ENCODE measurements at regions of chr12 and their contacts with region 1.

Region 1: DNA sequence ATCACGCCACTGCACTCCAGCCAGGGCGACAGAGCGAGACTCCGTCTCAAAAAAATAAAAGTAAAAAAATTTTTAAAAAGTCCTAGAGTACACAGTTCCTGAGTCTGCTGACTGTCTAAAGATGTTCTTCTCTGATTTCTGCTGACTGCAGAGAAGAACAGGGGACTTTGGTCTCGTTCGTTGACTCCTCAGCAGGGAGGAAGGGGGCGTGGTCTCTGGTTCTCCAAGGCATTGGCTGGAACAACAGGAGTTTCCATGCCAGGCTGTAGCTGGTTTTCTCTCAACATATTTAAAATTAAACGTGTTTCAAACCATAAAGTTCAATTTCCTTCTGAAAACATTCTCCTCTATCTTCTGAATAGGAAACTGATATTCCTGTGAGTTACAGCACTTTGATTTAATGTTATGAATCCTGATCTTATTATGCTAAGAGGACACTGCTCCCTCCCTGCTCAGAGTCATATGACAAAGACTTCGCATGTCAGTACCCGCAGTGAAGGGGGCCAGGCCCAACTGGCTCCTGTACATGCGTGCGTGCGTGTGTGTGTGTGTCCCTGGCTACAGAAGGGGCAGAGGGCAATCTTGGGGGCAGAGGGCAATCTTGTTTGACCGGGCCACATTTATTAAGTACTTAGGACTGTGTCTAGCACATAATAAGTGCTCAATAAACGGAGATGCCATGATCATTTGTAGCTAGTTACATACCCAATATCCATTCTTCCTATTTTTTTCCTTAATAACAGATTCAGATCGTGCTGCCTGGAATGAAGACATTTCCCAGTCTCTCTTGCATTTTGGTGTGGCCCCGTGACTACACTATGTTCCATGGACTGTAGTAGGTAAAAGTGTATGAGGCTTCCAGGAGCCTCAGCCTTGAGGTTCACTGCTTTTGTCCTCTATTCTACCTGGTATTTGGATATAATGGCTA is 16.5 kb upstream of the HNF1A start:
- DNase-seq: peak; percentile 27
- ATAC-seq: no peak
- H3K4me3 Mint-ChIP-seq: no peak overlapping the region
- H3K27ac Mint-ChIP-seq: peak overlapping the region; percentile 59
- H3K4me1 Mint-ChIP-seq: peaks cover 44% of the 10 kb centered on the region
- H3K27me3 Mint-ChIP-seq: no peaks in the 10 kb centered on the region

Region 2: DNA sequence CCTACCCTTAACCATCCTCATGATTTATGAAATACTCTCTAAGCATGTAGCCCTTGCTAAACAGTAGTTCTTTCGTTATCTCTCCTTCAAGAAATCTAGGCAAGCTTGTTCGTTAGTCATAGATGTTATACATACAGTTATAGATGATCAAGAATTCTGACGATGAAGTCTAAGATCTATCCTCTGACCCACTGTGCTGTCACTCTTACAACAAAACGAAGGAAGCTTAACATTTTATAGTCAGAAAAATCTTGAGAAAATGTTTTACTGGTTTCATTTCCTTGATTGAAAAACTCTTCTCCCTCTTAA is 126.6 kb before region 1 on chr12:
- CTCF ChIA-PET with region 1: interaction called, 3 read pairs
- POLR2A ChIA-PET with region 1: interaction called, 3 read pairs
- intact Hi-C with region 1: loop called in 1 of 2 experiments (anchors 5 kb)
- DNase-seq: no peak
- ATAC-seq: peak; percentile 86
- H3K4me3 Mint-ChIP-seq: peak overlapping the region; percentile 56
- H3K27ac Mint-ChIP-seq: peak overlapping the region; percentile 83
- H3K4me1 Mint-ChIP-seq: peaks cover 64% of the 10 kb centered on the region
- H3K27me3 Mint-ChIP-seq: no peaks in the 10 kb centered on the region

Region 3: GRCh38 chr12:120944645-120945231 is 17.1 kb before region 1 on chr12:
- CTCF ChIA-PET with region 1: interaction called, 10 read pairs
- POLR2A ChIA-PET with region 1: no interaction called
- intact Hi-C with region 1: no loop called
- DNase-seq: peak; percentile 86
- ATAC-seq: peak; percentile 91
- H3K4me3 Mint-ChIP-seq: no peak overlapping the region
- H3K27ac Mint-ChIP-seq: no peak overlapping the region
- H3K4me1 Mint-ChIP-seq: peaks cover 8% of the 10 kb centered on the region
- H3K27me3 Mint-ChIP-seq: no peaks in the 10 kb centered on the region

Measured in activated CD4-positive, alpha-beta T cell treated with anti-CD3 and anti-CD28 coated beads for 36 hours (primary cell).